Posterior vena cava (tissue), 2 donors: ENCODE measurements at regions of chrX and their contacts with region 1.

Region 1: GRCh38 chrX:100491174-100491573 is 81.1 kb upstream of the PCDH19 start:
- DNase-seq: no peak

Region 2: GRCh38 chrX:100447654-100448397 is 43.3 kb before region 1 on chrX:
- intact Hi-C with region 1: loop called in 1 of 2 experiments (anchors 2 kb)
- DNase-seq: no peak